AG04449 (cell line): ENCODE measurements at regions of chr1 and their contacts with region 1.

Region 1: GRCh38 chr1:116485071-116485735 is 85.6 kb downstream of the CD58 start:
- DNase-seq: no peak
- H3K4me3 ChIP-seq: no peak overlapping the region
- CTCF ChIP-seq: peak; percentile 92

Region 2: GRCh38 chr1:116122955-116123757 is 362.0 kb before region 1 on chr1:
- CTCF ChIA-PET with region 1: interaction called, 11 read pairs
- POLR2A ChIA-PET with region 1: no interaction called
- DNase-seq: peak; percentile 54
- H3K4me3 ChIP-seq: no peak overlapping the region
- CTCF ChIP-seq: no peak

Region 3: GRCh38 chr1:116159177-116159576 is 326.0 kb before region 1 on chr1:
- CTCF ChIA-PET with region 1: interaction called, 1,029 read pairs
- POLR2A ChIA-PET with region 1: no interaction called
- DNase-seq: no peak
- H3K4me3 ChIP-seq: no peak overlapping the region
- CTCF ChIP-seq: no peak

Region 4: DNA sequence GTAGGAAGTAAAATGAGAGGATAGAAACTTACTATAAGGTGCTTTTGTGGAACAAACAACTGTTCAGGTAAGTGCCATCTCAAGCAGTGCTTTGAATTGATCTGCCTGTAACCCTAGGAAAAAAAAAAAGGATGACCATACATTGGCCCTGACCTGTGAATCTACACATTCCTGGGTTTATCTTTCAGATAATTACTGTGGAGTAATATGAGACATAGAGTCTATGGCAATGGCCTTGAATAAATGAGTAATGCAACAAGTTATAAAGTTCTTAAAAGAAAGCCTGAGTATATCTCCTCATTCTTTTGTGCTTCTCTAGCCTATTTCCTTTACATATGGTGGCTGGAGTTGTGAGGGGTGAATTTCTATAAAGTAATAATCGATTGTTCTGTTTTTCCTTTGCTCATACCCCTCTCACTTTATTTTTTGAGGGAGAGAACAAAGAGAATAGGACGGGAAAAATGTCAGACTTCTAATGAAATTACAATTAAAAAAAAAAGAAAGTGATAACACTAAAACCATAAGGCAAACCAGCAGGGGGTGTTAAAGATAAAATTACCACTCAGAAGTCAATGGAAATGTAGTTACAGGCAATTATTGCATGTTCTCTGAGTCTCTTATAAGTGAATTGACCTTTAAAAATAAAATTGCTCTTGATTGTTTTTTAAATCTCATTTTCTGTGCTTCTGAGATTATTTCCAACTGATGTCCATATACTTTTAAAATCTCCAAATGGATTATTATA is 124.6 kb before region 1 on chr1:
- CTCF ChIA-PET with region 1: interaction called, 44 read pairs
- POLR2A ChIA-PET with region 1: no interaction called
- DNase-seq: no peak
- H3K4me3 ChIP-seq: no peak overlapping the region
- CTCF ChIP-seq: no peak

Region 5: GRCh38 chr1:116418091-116418830 is 66.9 kb before region 1 on chr1:
- CTCF ChIA-PET with region 1: interaction called, 22 read pairs
- POLR2A ChIA-PET with region 1: no interaction called
- DNase-seq: no peak
- H3K4me3 ChIP-seq: peak overlapping the region; percentile 70
- CTCF ChIP-seq: no peak

Region 6: GRCh38 chr1:116498789-116499628 is 13.8 kb after region 1 on chr1:
- CTCF ChIA-PET with region 1: interaction called, 241 read pairs
- POLR2A ChIA-PET with region 1: no interaction called
- DNase-seq: no peak
- H3K4me3 ChIP-seq: no peak overlapping the region
- CTCF ChIP-seq: peak; percentile 71

Region 7: GRCh38 chr1:116544588-116545358 is 59.6 kb after region 1 on chr1:
- CTCF ChIA-PET with region 1: no interaction called
- POLR2A ChIA-PET with region 1: no interaction called
- DNase-seq: no peak
- H3K4me3 ChIP-seq: no peak overlapping the region
- CTCF ChIP-seq: no peak

Region 8: DNA sequence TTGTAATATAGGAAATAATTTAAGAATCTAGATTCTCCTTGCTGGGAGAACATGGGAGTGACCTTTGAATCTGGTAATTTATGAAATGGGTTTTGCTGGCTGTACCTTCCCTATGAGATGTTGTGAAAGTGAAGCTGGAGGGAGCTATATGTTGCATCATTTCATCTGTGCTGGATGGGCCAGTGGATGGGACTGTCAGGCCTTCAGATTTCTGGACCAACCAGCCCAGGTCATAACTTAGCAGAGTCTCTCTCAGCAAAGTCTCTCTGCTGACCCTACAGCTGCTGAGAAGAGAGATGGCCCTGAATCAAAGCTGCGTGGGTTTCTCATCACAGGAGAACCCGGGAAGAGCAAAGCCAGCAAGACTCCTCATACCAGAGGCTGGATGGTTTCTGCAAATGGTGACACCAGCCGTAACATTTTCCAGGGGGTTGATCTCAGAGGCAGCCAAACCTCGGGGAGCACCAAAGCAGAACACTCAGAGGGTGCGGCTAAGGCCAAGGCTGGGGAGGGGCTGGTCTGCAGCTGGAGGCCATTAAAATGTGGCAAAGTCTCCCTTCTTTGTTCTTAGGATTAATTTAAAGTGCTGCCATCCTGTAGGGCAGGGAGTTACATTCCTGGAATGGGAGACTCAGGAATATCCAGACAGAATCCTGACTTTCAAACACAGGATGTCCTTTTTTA is 406.3 kb after region 1 on chr1:
- CTCF ChIA-PET with region 1: no interaction called
- POLR2A ChIA-PET with region 1: no interaction called
- DNase-seq: no peak
- H3K4me3 ChIP-seq: no peak overlapping the region
- CTCF ChIP-seq: no peak